MCF 10A (cell line): ENCODE measurements at regions of chr1 and their contacts with region 1.

Region 1: DNA sequence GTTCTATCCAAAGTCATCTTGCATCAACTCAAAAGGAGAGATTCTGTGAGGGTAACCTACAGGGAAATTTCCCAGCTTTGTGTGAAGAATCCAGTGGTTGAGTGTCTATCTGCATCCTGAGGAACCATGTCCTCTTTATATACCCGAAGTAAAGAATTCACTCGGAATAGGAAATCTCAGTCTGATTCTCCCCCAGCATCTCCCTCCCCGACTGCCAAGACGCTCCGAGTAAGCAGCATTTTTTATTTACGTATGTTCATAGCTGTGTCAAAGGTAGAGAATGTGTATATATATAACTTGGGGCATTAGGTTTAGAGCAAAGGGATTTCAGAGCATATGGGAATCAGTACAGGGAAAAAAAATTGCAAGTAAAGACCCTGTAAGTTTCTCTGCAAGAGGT is 170.2 kb downstream of the SYT2 start:
- DNase-seq: no peak
- H3K4me3 Mint-ChIP-seq: no peak overlapping the region
- H3K27ac Mint-ChIP-seq: peak overlapping the region; percentile 65
- H3K4me1 Mint-ChIP-seq: peaks cover 16% of the 10 kb centered on the region
- H3K27me3 Mint-ChIP-seq: no peaks in the 10 kb centered on the region
- CTCF ChIP-seq: no peak

Region 2: DNA sequence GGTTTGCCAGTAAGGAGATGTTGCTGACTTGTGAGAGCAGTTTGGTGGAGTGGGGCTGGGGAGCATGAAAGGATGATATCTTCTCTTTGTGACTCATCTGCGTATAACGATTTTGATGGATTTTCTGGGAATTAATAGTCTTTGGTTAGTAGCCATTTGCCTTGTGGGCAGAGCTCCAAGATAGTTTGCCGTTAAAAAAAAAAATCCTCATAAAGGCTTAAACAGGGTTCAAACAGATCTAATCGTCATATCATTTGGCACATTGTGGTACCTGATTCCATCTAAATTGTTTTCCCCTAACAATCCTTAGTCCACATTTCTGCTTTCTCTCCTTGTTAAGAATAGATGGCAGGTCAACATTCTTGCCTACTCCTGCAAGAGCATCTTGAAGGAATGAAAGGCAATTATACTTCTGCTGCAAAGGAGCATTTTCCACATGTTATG is 23.6 kb before region 1 on chr1:
- CTCF ChIA-PET with region 1: interaction called, 9 read pairs
- POLR2A ChIA-PET with region 1: interaction called, 10 read pairs
- intact Hi-C with region 1: no loop called
- DNase-seq: no peak
- H3K4me3 Mint-ChIP-seq: no peak overlapping the region
- H3K27ac Mint-ChIP-seq: no peak overlapping the region
- H3K4me1 Mint-ChIP-seq: no peaks in the 10 kb centered on the region
- H3K27me3 Mint-ChIP-seq: no peaks in the 10 kb centered on the region
- CTCF ChIP-seq: no peak